ENCODE measurements at regions of chr19 and their contacts with region 1.

Region 1: GRCh38 chr19:37896180-37896579 is 10.2 kb downstream of the WDR87 start:
- DNase-seq: no peak
- H3K4me3 ChIP-seq: no peak overlapping the region
- H3K27ac ChIP-seq: no peak overlapping the region
- H3K4me1 ChIP-seq: no peaks in the 10 kb centered on the region
- H3K27me3 ChIP-seq: peaks cover 0 to 2% of the 10 kb centered on the region in 2 experiments
- CTCF ChIP-seq: no peak
- POLR2A ChIP-seq: no peak

Region 2: DNA sequence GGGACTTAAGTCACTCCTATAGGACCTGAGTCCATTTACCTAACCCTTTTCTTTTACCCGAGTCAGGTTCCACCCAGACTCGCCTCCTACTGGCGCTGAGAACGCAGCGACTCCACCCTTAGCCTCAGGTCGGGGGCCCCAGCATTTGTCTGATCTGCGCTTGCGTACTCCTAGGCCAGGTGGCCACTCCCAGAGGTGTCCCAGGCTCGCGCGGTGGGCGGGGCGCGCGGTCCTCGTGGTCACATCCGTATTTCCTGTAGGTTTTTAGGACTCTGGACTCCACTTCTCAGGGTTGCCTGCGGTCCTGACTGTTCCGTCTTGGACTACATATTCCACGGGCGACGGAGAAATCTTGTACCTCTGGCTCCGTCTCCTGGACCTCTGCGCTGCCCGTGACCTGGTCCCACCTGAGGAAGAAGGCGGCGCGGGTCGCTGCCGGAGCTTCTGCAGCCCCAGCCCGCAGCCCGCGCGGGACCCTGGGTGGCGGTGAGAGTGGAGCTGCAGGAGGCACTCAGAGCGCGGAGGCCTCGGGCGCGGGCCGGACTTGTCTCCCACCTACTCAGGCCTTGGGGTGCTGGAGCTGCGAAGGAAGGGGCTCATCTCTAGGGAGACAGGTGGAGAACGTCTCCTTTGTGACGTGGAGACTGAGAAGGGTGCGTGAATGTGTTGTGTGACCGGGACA is 105.8 kb before region 1 on chr19:
- CTCF ChIA-PET with region 1: no interaction called
- POLR2A ChIA-PET with region 1: no interaction called
- dilution Hi-C with region 1: no loop called
- intact Hi-C with region 1: no loop called
- DNase-seq: no peak
- H3K4me3 ChIP-seq: no peak overlapping the region
- H3K27ac ChIP-seq: no peak overlapping the region
- H3K4me1 ChIP-seq: no peaks in the 10 kb centered on the region
- H3K27me3 ChIP-seq: no peaks in the 10 kb centered on the region
- CTCF ChIP-seq: no peak
- POLR2A ChIP-seq: no peak

Region 3: DNA sequence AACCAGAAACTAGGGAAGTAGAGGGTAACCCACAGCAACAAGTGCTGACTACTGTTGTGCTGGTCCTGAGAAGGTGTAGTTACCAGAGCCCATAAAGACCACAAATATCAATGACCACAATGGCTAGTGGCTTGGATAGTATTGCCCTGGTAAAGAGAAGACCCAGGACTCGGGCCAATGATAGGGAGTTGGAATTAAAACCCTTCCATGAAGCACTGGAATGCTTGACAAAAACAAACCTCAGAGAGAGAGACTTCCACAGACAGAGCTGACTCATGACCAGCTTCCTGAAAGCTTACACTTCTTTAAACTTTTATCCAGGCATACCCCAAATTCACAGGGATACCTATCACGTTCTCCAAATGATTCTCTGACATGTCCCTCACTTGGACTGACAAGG is 50.2 kb before region 1 on chr19:
- CTCF ChIA-PET with region 1: no interaction called
- POLR2A ChIA-PET with region 1: no interaction called
- dilution Hi-C with region 1: no loop called
- intact Hi-C with region 1: no loop called
- DNase-seq: no peak
- H3K4me3 ChIP-seq: no peak overlapping the region
- H3K27ac ChIP-seq: no peak overlapping the region
- H3K4me1 ChIP-seq: no peaks in the 10 kb centered on the region
- H3K27me3 ChIP-seq: no peaks in the 10 kb centered on the region
- CTCF ChIP-seq: no peak
- POLR2A ChIP-seq: no peak

Region 4: GRCh38 chr19:38095411-38096308 is 199.5 kb after region 1 on chr19:
- CTCF ChIA-PET with region 1: interaction called, 30 read pairs
- POLR2A ChIA-PET with region 1: no interaction called
- dilution Hi-C with region 1: no loop called
- intact Hi-C with region 1: no loop called
- DNase-seq: peak; percentile 70
- H3K4me3 ChIP-seq: no peak overlapping the region
- H3K27ac ChIP-seq: no peak overlapping the region
- H3K4me1 ChIP-seq: no peaks in the 10 kb centered on the region
- H3K27me3 ChIP-seq: no peaks in the 10 kb centered on the region
- CTCF ChIP-seq: peak; percentile 71 to 76
- POLR2A ChIP-seq: no peak

Measured in endothelial cell of umbilical vein (primary cell).